ENCODE measurements at regions of chr20 and their contacts with region 1.

Region 1: DNA sequence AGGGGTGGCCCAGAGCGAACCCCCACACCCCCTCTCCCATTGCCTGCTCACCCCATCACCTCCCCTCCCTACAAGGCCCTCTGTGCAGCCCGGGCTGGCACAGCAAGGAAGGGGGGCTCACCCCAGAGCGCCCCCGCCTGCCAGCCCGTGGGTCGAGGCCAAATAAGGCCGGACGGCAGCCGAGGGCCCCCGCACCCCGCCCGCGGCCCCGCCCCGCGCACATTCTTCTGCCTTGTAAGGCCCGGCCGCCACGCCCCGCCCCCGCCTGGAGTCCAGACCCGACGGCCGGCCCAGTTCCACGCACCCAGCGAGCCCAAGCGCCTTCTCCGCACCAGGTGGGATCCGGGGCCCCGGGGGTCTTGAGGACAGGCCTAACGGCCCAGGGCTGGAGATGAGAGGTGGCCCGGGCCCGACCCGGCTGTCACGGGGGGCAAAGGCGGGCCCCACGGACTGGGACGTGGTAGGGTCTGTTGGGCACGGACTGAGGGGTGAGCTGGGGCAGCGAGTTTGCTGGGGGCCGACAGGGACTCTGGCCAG is at the start of gene MYL9:
- DNase-seq: peak; percentile 75 to 97
- H3K4me3 ChIP-seq: peak within 1 kb of the TSS; percentile 92 to 93
- H3K27ac ChIP-seq: peak within 1 kb of the TSS; percentile 98 to 99
- H3K4me1 ChIP-seq: peaks cover 16 to 48% of the 10 kb centered on the region in 2 donors
- H3K27me3 ChIP-seq: no peaks in the 10 kb centered on the region
- CTCF ChIP-seq: no peak
- total RNA-seq, gene MYL9: 717 TPM

Region 2: GRCh38 chr20:36297656-36298055 is 243.6 kb before region 1 on chr20:
- intact Hi-C with region 1: no loop called
- DNase-seq: no peak
- H3K4me3 ChIP-seq: no peak overlapping the region
- H3K27ac ChIP-seq: no peak overlapping the region
- H3K4me1 ChIP-seq: no peaks in the 10 kb centered on the region
- H3K27me3 ChIP-seq: no peaks in the 10 kb centered on the region
- CTCF ChIP-seq: no peak

Region 3: DNA sequence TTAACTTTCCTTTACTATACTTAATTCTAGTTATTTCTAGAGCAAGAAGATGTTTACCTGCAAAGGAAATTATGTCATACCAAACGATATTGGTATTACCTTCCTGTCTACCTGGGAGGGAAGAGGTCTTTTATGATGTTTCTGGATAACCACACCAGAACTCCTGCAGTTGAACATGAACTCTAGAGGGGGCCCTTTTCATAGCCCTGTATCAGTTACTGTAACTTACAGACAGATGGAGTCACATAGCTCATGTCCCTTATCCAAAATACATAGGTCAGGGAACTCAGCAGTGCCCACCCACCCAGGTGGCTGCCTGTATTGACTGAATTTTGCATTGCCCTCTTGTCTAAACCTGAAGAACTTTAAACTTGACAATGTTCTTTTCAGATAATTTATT is 35.0 kb before region 1 on chr20:
- intact Hi-C with region 1: no loop called
- DNase-seq: no peak
- H3K4me3 ChIP-seq: no peak overlapping the region
- H3K27ac ChIP-seq: no peak overlapping the region
- H3K4me1 ChIP-seq: no peaks in the 10 kb centered on the region
- H3K27me3 ChIP-seq: no peaks in the 10 kb centered on the region
- CTCF ChIP-seq: peak in 1 of 3 experiments; percentile 15

Region 4: DNA sequence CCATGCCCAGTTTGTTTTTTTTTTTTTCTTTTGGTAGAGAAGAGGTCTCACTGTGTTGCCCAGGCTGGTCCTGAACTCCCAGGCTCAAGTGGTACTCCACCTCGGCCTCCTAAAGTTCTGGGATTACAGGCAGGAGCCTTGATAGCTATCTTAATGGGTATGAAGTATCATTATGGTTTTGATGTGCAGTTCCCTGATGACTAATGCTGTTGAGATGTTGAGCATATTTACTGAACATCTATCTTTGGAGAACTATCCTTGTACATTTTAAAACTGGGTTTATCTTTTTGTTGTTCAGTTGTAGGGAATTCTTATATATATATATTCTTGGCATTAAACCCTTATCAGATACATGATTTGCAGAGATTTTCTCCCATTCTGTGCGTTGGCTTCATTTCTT is 21.4 kb before region 1 on chr20:
- intact Hi-C with region 1: no loop called
- DNase-seq: peak in 1 of 2 donors; percentile 2
- H3K4me3 ChIP-seq: no peak overlapping the region
- H3K27ac ChIP-seq: no peak overlapping the region
- H3K4me1 ChIP-seq: peaks cover 0 to 21% of the 10 kb centered on the region in 2 donors
- H3K27me3 ChIP-seq: no peaks in the 10 kb centered on the region
- CTCF ChIP-seq: no peak

Region 5: GRCh38 chr20:36573103-36573794 is 32.0 kb after region 1 on chr20 and contains the start of gene TGIF2:
- intact Hi-C with region 1: loop called (anchors 2 kb)
- DNase-seq: peak; percentile 49 to 93
- H3K4me3 ChIP-seq: peak within 1 kb of the TSS; percentile 63 to 79
- H3K27ac ChIP-seq: peak within 1 kb of the TSS; percentile 83 to 90
- H3K4me1 ChIP-seq: peaks cover 0 to 20% of the 10 kb centered on the region in 2 donors
- H3K27me3 ChIP-seq: no peaks in the 10 kb centered on the region
- CTCF ChIP-seq: no peak
- total RNA-seq, gene TGIF2: 29.8 TPM

Region 6: GRCh38 chr20:36773597-36774390 is 232.5 kb after region 1 on chr20 and contains the start of gene DSN1:
- intact Hi-C with region 1: loop called (anchors 5 kb)
- DNase-seq: peak; percentile 92 to 99
- H3K4me3 ChIP-seq: peak within 1 kb of the TSS; percentile 72 to 85
- H3K27ac ChIP-seq: peak within 1 kb of the TSS; percentile 97 to 98
- H3K4me1 ChIP-seq: peaks cover 3 to 19% of the 10 kb centered on the region in 2 donors
- H3K27me3 ChIP-seq: no peaks in the 10 kb centered on the region
- CTCF ChIP-seq: peak in 1 of 3 experiments; percentile 60
- total RNA-seq, gene DSN1: 26.9 TPM

Measured in ascending aorta (tissue), 2 donors.